CD8-positive, alpha-beta T cell (primary cell): ENCODE measurements at regions of chr5 and their contacts with region 1.

Region 1: DNA sequence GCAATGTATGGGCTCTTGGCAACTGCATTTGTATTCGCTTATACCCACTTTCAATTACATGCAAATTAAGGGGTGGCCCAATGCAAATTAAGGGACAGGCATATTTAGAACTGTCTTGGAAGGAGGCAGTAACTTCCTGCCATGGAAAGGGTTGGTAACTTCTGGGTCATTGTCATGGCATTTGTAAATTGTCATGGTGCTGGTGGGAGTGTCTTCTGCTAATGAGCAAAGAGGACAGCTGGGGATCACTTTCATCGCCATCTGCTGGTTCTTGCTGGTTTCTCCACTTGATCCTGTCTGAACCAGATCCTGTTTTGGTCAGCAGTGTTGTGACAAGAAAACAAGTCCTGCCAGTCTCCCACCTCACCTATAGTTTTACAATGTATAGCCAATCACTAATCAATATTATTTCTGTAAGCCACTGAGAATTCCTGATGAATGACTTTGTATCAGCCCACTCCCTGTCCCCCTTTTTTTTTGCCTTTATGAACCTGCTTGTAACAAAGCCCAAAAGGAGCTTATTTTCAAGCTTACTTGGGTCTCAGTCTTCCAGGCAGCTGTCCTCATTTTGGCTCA is 23.4 kb upstream of the UGT3A2 start:
- DNase-seq: peak in 1 of 9 experiments; percentile 12
- ATAC-seq: no peak
- H3K4me3 ChIP-seq: no peak overlapping the region
- H3K4me3 Mint-ChIP-seq: no peak overlapping the region
- H3K27ac ChIP-seq: no peak overlapping the region
- H3K27ac Mint-ChIP-seq: no peak overlapping the region
- H3K4me1 ChIP-seq: no peaks in the 10 kb centered on the region
- H3K4me1 Mint-ChIP-seq: no peaks in the 10 kb centered on the region
- H3K27me3 ChIP-seq: no peaks in the 10 kb centered on the region
- H3K27me3 Mint-ChIP-seq: peaks cover 14% of the 10 kb centered on the region
- CTCF ChIP-seq: no peak

Region 2: GRCh38 chr5:36305571-36306326 is 215.7 kb after region 1 on chr5:
- CTCF ChIA-PET with region 1: no interaction called
- POLR2A ChIA-PET with region 1: no interaction called
- intact Hi-C with region 1: loop called in 1 of 2 experiments (anchors 10 kb)
- DNase-seq: peak in 3 of 9 experiments; percentile 5 to 31 (median 20)
- ATAC-seq: no peak
- H3K4me3 ChIP-seq: no peak overlapping the region
- H3K4me3 Mint-ChIP-seq: no peak overlapping the region
- H3K27ac ChIP-seq: no peak overlapping the region
- H3K27ac Mint-ChIP-seq: no peak overlapping the region
- H3K4me1 ChIP-seq: no peaks in the 10 kb centered on the region
- H3K4me1 Mint-ChIP-seq: peaks cover 5% of the 10 kb centered on the region
- H3K27me3 ChIP-seq: peaks cover 0 to 2% of the 10 kb centered on the region in 2 experiments
- H3K27me3 Mint-ChIP-seq: no peaks in the 10 kb centered on the region
- CTCF ChIP-seq: no peak